ENCODE measurements at regions of chr20 and their contacts with region 1.

Region 1: GRCh38 chr20:3446779-3447178 is 24.0 kb upstream of the ATRN start:
- DNase-seq: no peak
- ATAC-seq: no peak
- H3K4me3 ChIP-seq: no peak overlapping the region
- H3K27ac ChIP-seq: no peak overlapping the region
- H3K4me1 ChIP-seq: no peaks in the 10 kb centered on the region
- H3K27me3 ChIP-seq: peaks cover 3% of the 10 kb centered on the region; the same call in 1 of the 2 replicates
- CTCF ChIP-seq: no peak

Region 2: DNA sequence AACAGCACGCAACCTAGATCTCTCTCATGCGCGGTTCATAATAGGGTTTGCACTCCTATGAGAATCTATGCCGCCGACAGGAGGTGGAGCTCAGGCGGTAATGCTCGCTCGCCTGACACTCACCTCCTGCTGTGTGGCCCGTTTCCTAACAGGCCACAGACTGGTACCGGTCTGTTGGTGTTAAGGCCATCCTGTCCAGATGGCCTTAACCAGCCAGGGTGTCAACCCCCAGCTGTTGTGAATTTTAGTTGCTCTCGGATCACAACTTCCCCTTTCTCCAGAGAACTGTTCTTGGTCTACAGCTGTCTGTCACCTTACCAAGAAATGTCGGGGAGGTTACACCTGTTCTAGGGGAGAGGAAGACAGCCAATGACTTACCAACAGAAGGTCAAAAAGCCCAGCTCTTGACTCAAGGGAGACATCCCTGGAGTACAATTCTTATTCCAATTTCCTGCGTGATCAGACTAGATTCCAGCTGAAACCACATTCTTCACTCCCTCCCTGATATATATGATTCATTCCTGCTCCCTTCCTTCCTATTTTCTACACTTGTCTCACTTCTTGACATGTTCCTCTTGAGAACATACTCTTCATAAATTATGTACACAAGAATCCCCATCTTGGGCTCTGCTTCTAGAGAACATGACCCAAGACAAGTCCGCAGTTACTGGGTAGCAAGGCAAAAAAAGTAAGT is 16.3 kb before region 1 on chr20:
- CTCF ChIA-PET with region 1: no interaction called
- POLR2A ChIA-PET with region 1: interaction called, 13 read pairs
- in situ Hi-C with region 1: no loop called
- intact Hi-C with region 1: no loop called
- DNase-seq: no peak
- ATAC-seq: no peak
- H3K4me3 ChIP-seq: no peak overlapping the region
- H3K27ac ChIP-seq: no peak overlapping the region
- H3K4me1 ChIP-seq: no peaks in the 10 kb centered on the region
- H3K27me3 ChIP-seq: no peaks in the 10 kb centered on the region
- CTCF ChIP-seq: no peak

Region 3: DNA sequence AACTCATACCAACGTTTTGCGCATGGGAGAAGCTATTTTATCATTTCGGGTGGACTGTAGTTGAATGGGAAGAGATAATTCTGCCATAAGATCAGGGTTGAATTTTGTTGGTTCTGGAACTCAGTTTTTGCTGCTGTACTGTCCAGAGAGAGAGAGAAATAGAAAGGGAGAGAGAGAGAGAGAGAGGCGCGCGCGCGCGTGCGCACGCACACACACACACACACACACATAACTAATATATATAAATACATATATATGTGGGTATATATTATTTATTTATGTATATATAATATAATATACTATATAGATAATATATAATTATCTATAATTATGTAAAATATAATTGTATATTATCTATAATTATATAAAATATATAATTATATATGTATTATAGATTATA is 45.9 kb after region 1 on chr20:
- CTCF ChIA-PET with region 1: no interaction called
- POLR2A ChIA-PET with region 1: no interaction called
- in situ Hi-C with region 1: no loop called
- intact Hi-C with region 1: loop called (anchors 2 kb)
- DNase-seq: no peak
- ATAC-seq: no peak
- H3K4me3 ChIP-seq: no peak overlapping the region
- H3K27ac ChIP-seq: no peak overlapping the region
- H3K4me1 ChIP-seq: no peaks in the 10 kb centered on the region
- H3K27me3 ChIP-seq: no peaks in the 10 kb centered on the region
- CTCF ChIP-seq: no peak

Measured in Panc1 (cell line).